B cell (primary cell): ENCODE measurements at regions of chr3 and their contacts with region 1.

Region 1: DNA sequence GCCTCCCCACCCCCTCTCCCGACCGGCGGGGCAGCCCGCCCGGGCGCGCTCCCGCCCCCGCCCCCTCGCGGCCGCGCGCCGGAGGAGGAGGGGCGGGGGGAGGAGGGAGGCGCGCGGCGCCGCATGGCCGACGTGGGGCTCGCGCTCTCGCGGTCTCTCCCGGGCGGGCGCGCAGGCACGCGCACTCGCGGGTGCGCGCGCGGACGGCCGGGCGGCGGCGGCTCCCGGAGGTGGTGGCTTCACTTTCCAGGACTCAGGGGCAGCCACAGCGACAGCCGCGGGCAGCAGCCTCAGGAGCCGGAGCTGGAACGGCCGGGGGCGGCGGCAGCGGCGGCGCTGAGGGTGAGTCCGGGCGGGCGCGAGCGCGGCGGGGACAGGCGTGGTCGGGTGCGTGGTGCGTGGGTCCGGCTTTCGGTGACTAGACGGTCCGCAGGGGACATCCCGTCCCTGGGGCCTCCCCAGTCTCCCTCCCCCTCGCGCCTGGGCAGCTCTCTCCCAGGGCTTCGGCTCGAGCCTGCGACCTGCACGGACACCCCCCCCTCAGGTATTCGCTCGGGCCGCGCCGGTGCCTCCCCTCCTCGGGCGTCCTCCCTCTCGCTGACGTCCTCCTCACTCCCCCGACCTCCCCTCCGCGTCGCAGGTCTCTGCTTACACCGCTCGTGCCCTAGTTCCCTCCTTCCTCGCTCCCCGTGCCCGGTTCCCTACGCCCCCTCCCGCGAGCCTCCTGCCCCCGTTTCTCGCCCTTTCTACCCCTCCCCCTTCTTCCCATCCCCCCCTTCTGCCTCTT is at the start of gene UBE2E2:
- DNase-seq: peak; percentile 90
- ATAC-seq: peak; percentile 77
- H3K4me3 ChIP-seq: peak within 1 kb of the TSS; percentile 62 to 97 (median 90)
- H3K4me3 Mint-ChIP-seq: peak within 1 kb of the TSS; percentile 97
- H3K27ac ChIP-seq: peak within 1 kb of the TSS; percentile 66 to 78
- H3K27ac Mint-ChIP-seq: peak within 1 kb of the TSS; percentile 86
- H3K4me1 ChIP-seq: peaks cover 13% of the 10 kb centered on the region in 2 donors
- H3K4me1 Mint-ChIP-seq: peaks cover 35% of the 10 kb centered on the region
- H3K27me3 ChIP-seq: no peaks in the 10 kb centered on the region
- H3K27me3 Mint-ChIP-seq: no peaks in the 10 kb centered on the region
- CTCF ChIP-seq: no peak
- total RNA-seq, gene UBE2E2: 44.2 and 45.0 TPM in 2 replicates

Region 2: DNA sequence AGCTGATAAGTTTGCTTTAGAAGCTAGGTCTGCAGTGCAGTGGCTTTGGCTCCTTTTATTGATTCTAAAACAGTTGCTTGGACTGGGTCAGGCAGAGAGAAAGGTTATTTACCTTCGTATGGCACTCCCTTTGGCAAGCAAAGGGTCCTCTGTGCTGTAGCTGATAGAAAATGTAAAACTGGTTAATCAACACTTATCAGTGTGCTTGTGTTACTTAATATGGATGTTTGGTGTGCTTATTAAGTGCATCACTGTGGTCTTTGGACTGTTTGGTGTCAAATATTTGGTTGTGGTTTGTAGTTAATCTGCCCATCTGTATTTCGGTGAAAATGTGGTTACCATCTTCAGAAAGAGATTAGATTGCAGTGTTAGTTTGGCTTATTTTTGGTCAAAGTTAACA is 16.0 kb after region 1 on chr3:
- CTCF ChIA-PET with region 1: no interaction called
- POLR2A ChIA-PET with region 1: no interaction called
- intact Hi-C with region 1: no loop called
- DNase-seq: no peak
- ATAC-seq: no peak
- H3K4me3 ChIP-seq: no peak overlapping the region
- H3K4me3 Mint-ChIP-seq: peak overlapping the region; percentile 4
- H3K27ac ChIP-seq: peak overlapping the region in 1 of 2 donors; percentile 48
- H3K27ac Mint-ChIP-seq: peak overlapping the region; percentile 23
- H3K4me1 ChIP-seq: peaks cover 27 to 32% of the 10 kb centered on the region in 2 donors
- H3K4me1 Mint-ChIP-seq: peaks cover 61% of the 10 kb centered on the region
- H3K27me3 ChIP-seq: no peaks in the 10 kb centered on the region
- H3K27me3 Mint-ChIP-seq: no peaks in the 10 kb centered on the region
- CTCF ChIP-seq: no peak

Region 3: DNA sequence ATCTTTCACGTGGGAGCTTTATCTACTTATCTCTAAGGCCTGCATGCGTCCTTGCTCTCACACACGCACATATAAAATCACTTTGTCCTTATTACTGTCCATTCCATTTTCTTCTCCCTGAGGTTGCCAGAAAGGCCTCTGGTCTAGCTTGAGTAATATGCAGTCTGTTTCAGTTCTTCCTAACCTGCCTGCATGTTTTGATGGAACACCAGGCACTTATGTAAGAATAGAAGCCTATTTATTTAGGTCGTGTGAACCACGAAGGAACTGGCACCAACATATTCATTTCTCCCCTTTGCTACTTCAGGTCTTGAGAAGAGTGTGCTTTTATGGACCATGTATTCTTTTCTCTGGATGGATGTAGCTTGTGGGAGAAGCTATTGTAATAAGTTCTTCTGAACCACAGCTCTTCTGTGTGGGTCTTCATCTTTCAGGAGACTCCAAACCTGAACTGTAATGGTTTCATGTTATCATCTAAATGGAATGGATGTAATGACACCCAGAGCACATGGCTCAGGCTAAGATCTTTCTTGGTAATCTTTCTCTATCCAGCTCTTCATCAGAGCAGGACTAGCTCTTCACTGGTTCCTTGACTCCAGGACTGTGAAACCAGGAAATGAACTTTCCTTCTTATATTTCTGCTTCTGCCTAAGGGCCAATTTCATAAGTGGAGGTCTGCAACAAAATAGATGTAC is 53.8 kb after region 1 on chr3:
- CTCF ChIA-PET with region 1: no interaction called
- POLR2A ChIA-PET with region 1: interaction called, 11 read pairs
- intact Hi-C with region 1: no loop called
- DNase-seq: no peak
- ATAC-seq: no peak
- H3K4me3 ChIP-seq: no peak overlapping the region
- H3K4me3 Mint-ChIP-seq: no peak overlapping the region
- H3K27ac ChIP-seq: no peak overlapping the region
- H3K27ac Mint-ChIP-seq: no peak overlapping the region
- H3K4me1 ChIP-seq: peaks cover 19 to 22% of the 10 kb centered on the region in 2 donors
- H3K4me1 Mint-ChIP-seq: peaks cover 46% of the 10 kb centered on the region
- H3K27me3 ChIP-seq: no peaks in the 10 kb centered on the region
- H3K27me3 Mint-ChIP-seq: no peaks in the 10 kb centered on the region
- CTCF ChIP-seq: no peak

Region 4: GRCh38 chr3:23405081-23405480 is 202.0 kb after region 1 on chr3:
- CTCF ChIA-PET with region 1: no interaction called
- POLR2A ChIA-PET with region 1: no interaction called
- intact Hi-C with region 1: loop called (anchors 10 kb)
- DNase-seq: peak; percentile 28
- ATAC-seq: peak; percentile 51
- H3K4me3 ChIP-seq: peak overlapping the region in 1 of 5 experiments; percentile 2
- H3K4me3 Mint-ChIP-seq: peak overlapping the region; percentile 49
- H3K27ac ChIP-seq: no peak overlapping the region
- H3K27ac Mint-ChIP-seq: no peak overlapping the region
- H3K4me1 ChIP-seq: peaks cover 25 to 37% of the 10 kb centered on the region in 2 donors
- H3K4me1 Mint-ChIP-seq: peaks cover 58% of the 10 kb centered on the region
- H3K27me3 ChIP-seq: no peaks in the 10 kb centered on the region
- H3K27me3 Mint-ChIP-seq: no peaks in the 10 kb centered on the region
- CTCF ChIP-seq: no peak

Region 5: GRCh38 chr3:23668430-23668904 is 465.4 kb after region 1 on chr3:
- CTCF ChIA-PET with region 1: no interaction called
- POLR2A ChIA-PET with region 1: no interaction called
- intact Hi-C with region 1: loop called (anchors 10 kb)
- DNase-seq: no peak
- ATAC-seq: no peak
- H3K4me3 ChIP-seq: no peak overlapping the region
- H3K4me3 Mint-ChIP-seq: no peak overlapping the region
- H3K27ac ChIP-seq: no peak overlapping the region
- H3K27ac Mint-ChIP-seq: peak overlapping the region; percentile 27
- H3K4me1 ChIP-seq: peaks cover 12 to 16% of the 10 kb centered on the region in 2 donors
- H3K4me1 Mint-ChIP-seq: peaks cover 15% of the 10 kb centered on the region
- H3K27me3 ChIP-seq: peaks cover 0 to 14% (median 5%) of the 10 kb centered on the region in 4 experiments
- H3K27me3 Mint-ChIP-seq: peaks cover 26% of the 10 kb centered on the region
- CTCF ChIP-seq: no peak

Region 6: GRCh38 chr3:23916886-23917678 is 714.0 kb after region 1 on chr3 and contains the starts of genes NKIRAS1 and RPL15:
- CTCF ChIA-PET with region 1: no interaction called
- POLR2A ChIA-PET with region 1: interaction called, 6 read pairs
- intact Hi-C with region 1: loop called (anchors 1 kb)
- DNase-seq: peak; percentile 97
- ATAC-seq: peak; percentile 92
- H3K4me3 ChIP-seq: peak within 1 kb of the TSS; percentile 83 to 99 (median 99)
- H3K4me3 Mint-ChIP-seq: peak within 1 kb of the TSS; percentile 99
- H3K27ac ChIP-seq: peak within 1 kb of the TSS; percentile 85 to 94
- H3K27ac Mint-ChIP-seq: peak within 1 kb of the TSS; percentile 99
- H3K4me1 ChIP-seq: peaks cover 33 to 35% of the 10 kb centered on the region in 2 donors
- H3K4me1 Mint-ChIP-seq: peaks cover 51% of the 10 kb centered on the region
- H3K27me3 ChIP-seq: no peaks in the 10 kb centered on the region
- H3K27me3 Mint-ChIP-seq: peaks cover 4% of the 10 kb centered on the region
- CTCF ChIP-seq: peak; percentile 36
- total RNA-seq, gene NKIRAS1: 3.5 and 4.7 TPM in 2 replicates
- total RNA-seq, gene RPL15: 2,162 and 2,177 TPM in 2 replicates

Region 7: DNA sequence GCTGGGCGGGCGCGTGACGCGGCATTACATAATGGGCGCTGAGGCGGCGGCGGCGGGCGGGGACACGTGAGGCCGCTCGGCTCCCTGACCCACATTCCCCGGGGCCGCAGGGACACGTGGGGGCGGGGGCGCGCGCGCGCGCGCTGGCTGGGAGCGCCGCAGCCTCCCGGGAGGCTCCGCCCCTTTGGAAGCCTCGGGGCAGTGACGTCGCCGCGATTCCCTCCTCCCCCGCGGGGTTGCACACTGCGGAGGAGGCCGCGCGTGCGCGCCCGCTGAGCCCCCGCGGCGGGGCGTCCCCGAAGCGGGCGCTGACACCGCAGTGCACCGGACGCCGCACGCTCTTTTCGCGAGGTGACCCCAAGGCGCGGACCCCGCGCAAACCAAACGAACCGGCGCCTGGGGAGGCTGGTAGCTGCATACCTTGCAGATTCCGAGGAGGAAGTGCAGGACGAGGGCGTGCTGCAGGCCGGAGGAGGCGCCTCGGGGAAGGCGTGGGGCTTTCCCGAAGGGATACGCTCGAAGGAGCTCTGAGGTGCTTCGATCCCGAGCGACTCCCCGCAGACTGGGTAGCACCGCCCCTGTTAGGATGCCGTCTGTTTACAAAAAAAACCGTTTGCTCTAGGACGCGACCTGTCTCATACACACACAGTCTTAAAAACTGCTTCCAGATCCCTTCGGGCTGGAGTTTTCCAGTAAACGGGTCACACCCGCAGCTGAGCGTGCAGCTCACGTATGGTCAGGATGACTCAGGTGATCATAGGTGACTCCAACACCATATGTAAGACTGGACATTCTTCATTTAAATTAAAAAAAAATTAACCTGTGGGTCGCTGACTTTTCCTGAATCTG is 743.0 kb after region 1 on chr3:
- CTCF ChIA-PET with region 1: no interaction called
- POLR2A ChIA-PET with region 1: no interaction called
- intact Hi-C with region 1: loop called (anchors 2 kb)
- DNase-seq: peak; percentile 99
- ATAC-seq: peak; percentile 77
- H3K4me3 ChIP-seq: peak overlapping the region; percentile 49 to 88 (median 84)
- H3K4me3 Mint-ChIP-seq: peak overlapping the region; percentile 93
- H3K27ac ChIP-seq: peak overlapping the region; percentile 83
- H3K27ac Mint-ChIP-seq: peak overlapping the region; percentile 92
- H3K4me1 ChIP-seq: peaks cover 30 to 33% of the 10 kb centered on the region in 2 donors
- H3K4me1 Mint-ChIP-seq: peaks cover 48% of the 10 kb centered on the region
- H3K27me3 ChIP-seq: no peaks in the 10 kb centered on the region
- H3K27me3 Mint-ChIP-seq: no peaks in the 10 kb centered on the region
- CTCF ChIP-seq: no peak